ENCODE measurements at regions of chr3 and their contacts with region 1.

Region 1: GRCh38 chr3:71537211-71537611 is 46.3 kb downstream of the FOXP1 start:
- DNase-seq: peak; percentile 78
- ATAC-seq: peak; percentile 3; the same call in 1 of the 2 replicates
- H3K4me3 ChIP-seq: no peak overlapping the region
- H3K27ac ChIP-seq: peak overlapping the region; percentile 23
- H3K4me1 ChIP-seq: peaks cover 52% of the 10 kb centered on the region
- H3K27me3 ChIP-seq: no peaks in the 10 kb centered on the region
- CTCF ChIP-seq: no peak

Region 2: GRCh38 chr3:71031914-71032521 is 505.2 kb before region 1 on chr3:
- CTCF ChIA-PET with region 1: no interaction called
- POLR2A ChIA-PET with region 1: no interaction called
- intact Hi-C with region 1: loop called (anchors 5 kb)
- DNase-seq: no peak
- ATAC-seq: no peak
- H3K4me3 ChIP-seq: no peak overlapping the region
- H3K27ac ChIP-seq: peak overlapping the region; percentile 36; the same call in 1 of the 2 replicates
- H3K4me1 ChIP-seq: peaks cover 37% of the 10 kb centered on the region
- H3K27me3 ChIP-seq: no peaks in the 10 kb centered on the region
- CTCF ChIP-seq: no peak

Region 3: DNA sequence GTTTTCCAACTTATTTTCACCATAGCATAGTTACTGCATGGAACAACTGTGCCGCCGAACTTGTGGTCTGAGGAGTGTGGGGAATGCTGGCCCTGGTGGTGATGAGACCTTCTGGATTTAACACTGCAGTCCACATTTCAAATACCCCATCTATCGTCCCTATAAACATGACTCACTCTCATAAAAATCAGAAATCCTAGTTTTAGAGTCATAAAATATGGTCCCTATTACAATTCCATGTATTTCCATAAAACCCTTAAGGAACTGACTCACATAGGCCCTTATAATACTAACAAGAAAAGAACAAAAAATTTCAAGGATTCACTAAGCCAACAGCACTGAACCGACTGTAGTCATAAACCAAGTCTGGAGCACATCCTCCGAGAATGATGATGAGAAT is 100.9 kb before region 1 on chr3:
- CTCF ChIA-PET with region 1: interaction called, 4 read pairs
- POLR2A ChIA-PET with region 1: no interaction called
- intact Hi-C with region 1: loop called (anchors 2 kb)
- DNase-seq: peak; percentile 91
- ATAC-seq: peak; percentile 93
- H3K4me3 ChIP-seq: no peak overlapping the region
- H3K27ac ChIP-seq: peak overlapping the region; percentile 48
- H3K4me1 ChIP-seq: peaks cover 24% of the 10 kb centered on the region
- H3K27me3 ChIP-seq: no peaks in the 10 kb centered on the region
- CTCF ChIP-seq: no peak

Region 4: GRCh38 chr3:71456156-71456555 is 81.1 kb before region 1 on chr3:
- CTCF ChIA-PET with region 1: no interaction called
- POLR2A ChIA-PET with region 1: interaction called, 13 read pairs
- intact Hi-C with region 1: no loop called
- DNase-seq: no peak
- ATAC-seq: no peak
- H3K4me3 ChIP-seq: no peak overlapping the region
- H3K27ac ChIP-seq: no peak overlapping the region
- H3K4me1 ChIP-seq: peaks cover 47% of the 10 kb centered on the region
- H3K27me3 ChIP-seq: no peaks in the 10 kb centered on the region
- CTCF ChIP-seq: no peak

Region 5: GRCh38 chr3:71504250-71505036 is 32.8 kb before region 1 on chr3:
- CTCF ChIA-PET with region 1: no interaction called
- POLR2A ChIA-PET with region 1: interaction called, 3 read pairs
- intact Hi-C with region 1: loop called (anchors 2 kb)
- DNase-seq: peak; percentile 92
- ATAC-seq: peak; percentile 97
- H3K4me3 ChIP-seq: peak overlapping the region; percentile 57
- H3K27ac ChIP-seq: peak overlapping the region; percentile 89
- H3K4me1 ChIP-seq: peaks cover 22% of the 10 kb centered on the region
- H3K27me3 ChIP-seq: no peaks in the 10 kb centered on the region
- CTCF ChIP-seq: no peak

Region 6: DNA sequence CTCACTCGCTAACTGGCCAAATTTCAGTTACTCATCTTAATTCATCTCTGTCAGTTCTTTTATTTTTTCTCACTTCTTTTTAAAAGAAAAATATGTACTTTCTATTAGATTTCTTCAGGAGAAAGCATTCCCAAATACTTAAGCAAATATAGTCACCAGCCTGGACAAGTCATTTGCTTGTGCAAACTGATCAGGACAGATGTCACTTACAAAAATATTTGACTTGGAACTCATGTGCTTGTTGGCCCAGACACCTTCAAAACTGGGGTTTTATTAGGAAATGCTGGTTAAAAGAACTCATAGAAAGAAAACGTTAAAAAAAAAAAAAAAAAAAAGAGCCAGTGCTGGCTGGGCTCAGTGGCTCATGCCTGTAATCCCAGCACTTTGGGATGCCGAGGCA is 77.7 kb after region 1 on chr3:
- CTCF ChIA-PET with region 1: no interaction called
- POLR2A ChIA-PET with region 1: no interaction called
- intact Hi-C with region 1: no loop called
- DNase-seq: no peak
- ATAC-seq: no peak
- H3K4me3 ChIP-seq: no peak overlapping the region
- H3K27ac ChIP-seq: no peak overlapping the region
- H3K4me1 ChIP-seq: no peaks in the 10 kb centered on the region
- H3K27me3 ChIP-seq: no peaks in the 10 kb centered on the region
- CTCF ChIP-seq: no peak

Measured in PC-3 (cell line).